ENCODE measurements at regions of chr20 and their contacts with region 1.

Region 1: DNA sequence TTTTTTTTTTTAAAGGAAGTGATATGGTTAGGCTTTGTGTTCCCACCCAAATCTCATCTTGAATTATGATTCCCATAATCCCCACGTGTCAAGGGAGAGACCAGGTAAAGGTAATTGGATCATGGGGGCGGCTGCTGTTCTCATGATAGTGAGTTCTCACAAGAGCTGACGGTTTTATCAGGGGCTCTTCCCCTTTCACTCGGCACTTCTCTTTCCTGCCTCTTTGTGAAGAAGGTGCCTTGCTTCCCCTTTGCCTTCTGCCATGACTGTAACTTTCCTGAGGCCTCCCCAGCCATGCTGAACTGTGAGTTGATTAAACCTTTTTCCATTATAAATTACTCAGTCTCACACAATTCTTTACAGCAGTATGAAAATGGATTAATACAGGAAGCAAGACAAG is 64.3 kb downstream of the ZFP64 start:
- DNase-seq: no peak
- CTCF ChIP-seq: no peak

Region 2: DNA sequence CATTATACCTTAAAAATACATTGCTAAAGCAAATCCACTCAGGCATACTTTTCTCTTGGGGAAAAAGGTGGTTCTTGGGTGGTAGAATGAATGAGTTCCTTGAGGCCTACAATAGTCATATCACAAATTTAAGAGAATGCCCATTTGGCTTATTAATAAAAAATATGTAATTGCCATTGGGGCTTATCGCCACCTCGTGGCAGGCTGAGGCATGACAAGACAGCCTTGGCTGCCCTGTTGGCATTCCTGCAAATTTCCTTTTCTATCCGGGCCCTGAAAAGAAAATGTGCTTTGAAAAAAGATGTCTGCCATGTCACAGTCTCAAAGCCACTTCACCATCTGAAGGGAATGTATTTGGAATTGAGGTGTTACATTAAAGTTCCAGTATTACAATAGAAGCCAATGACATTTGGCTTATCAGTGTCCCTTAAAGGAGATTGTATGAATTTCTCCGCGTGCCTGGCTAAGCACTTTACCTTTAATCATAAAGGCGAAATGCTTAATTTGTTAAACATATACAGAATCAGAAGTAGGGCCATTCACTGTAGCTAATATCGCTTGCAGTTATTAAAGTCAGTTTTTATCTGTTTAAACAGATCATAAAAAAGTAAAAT is 252.5 kb after region 1 on chr20:
- in situ Hi-C with region 1: loop called (anchors 25 kb)
- DNase-seq: peak; percentile 35
- CTCF ChIP-seq: peak; percentile 91

Measured in GM13977 (cell line).